ENCODE measurements at regions of chr3 and their contacts with region 1.

Region 1: GRCh38 chr3:126679318-126679751 is 24.4 kb upstream of the TXNRD3 start:
- DNase-seq: peak; percentile 66 to 94 (median 78)
- ATAC-seq: peak; percentile 98
- H3K4me3 ChIP-seq: no peak overlapping the region
- H3K27ac ChIP-seq: no peak overlapping the region
- H3K4me1 ChIP-seq: peaks cover 0 to 8% of the 10 kb centered on the region in 2 donors
- H3K27me3 ChIP-seq: peaks cover 0 to 20% of the 10 kb centered on the region in 2 donors
- CTCF ChIP-seq: peak; percentile 98

Region 2: GRCh38 chr3:126419886-126420786 is 259.2 kb before region 1 on chr3:
- intact Hi-C with region 1: no loop called
- DNase-seq: no peak
- ATAC-seq: no peak
- H3K4me3 ChIP-seq: no peak overlapping the region
- H3K27ac ChIP-seq: no peak overlapping the region
- H3K4me1 ChIP-seq: no peaks in the 10 kb centered on the region
- H3K27me3 ChIP-seq: peaks cover 6 to 53% of the 10 kb centered on the region in 2 donors
- CTCF ChIP-seq: no peak

Region 3: DNA sequence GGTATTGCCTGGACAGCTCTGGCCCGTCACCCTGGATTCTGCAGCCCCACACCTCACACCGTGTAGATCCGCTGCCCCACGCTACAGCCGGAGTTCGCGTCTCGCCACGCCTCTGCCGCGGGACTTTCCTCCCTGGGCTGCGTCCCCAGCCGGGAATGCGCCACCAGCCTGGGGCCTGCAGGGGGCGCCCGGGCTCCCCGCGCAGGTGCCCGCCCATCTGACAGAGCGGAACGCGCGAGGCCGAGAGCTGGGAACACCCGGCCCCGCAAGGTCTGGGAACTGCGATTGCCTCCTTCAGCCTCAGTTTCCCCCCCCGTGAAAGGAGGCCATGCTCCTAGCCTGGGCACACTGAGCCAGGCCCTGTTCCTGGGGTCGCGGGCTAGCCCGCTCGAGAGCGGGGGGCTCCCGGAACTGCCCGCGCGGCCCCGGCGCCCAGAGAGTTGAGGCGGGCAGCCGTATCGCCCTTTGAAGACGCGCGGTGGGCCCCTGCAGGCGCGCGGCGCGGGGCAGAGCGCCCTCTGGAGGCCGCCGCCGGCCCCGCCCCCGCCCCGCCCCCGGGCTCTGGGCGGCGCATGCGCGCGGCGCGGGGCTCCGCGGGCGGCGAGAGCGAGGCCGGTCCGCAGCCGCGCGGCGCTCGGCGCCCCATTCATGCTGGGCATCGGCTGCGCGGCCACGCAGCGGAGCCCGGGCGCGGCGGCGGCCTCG is 303.3 kb after region 1 on chr3 and contains the start of gene PLXNA1:
- intact Hi-C with region 1: loop called in 1 of 2 experiments (anchors 5 kb)
- DNase-seq: peak; percentile 67 to 94 (median 80)
- ATAC-seq: peak; percentile 94
- H3K4me3 ChIP-seq: peak within 1 kb of the TSS; percentile 66 to 76
- H3K27ac ChIP-seq: peak within 1 kb of the TSS; percentile 77 to 84
- H3K4me1 ChIP-seq: peaks cover 12 to 30% of the 10 kb centered on the region in 2 donors
- H3K27me3 ChIP-seq: peaks cover 0 to 62% of the 10 kb centered on the region in 2 donors
- CTCF ChIP-seq: peak; percentile 89 to 96
- polyA plus RNA-seq, gene PLXNA1: 27.2 to 39.5 (median 29.2) TPM

Region 4: DNA sequence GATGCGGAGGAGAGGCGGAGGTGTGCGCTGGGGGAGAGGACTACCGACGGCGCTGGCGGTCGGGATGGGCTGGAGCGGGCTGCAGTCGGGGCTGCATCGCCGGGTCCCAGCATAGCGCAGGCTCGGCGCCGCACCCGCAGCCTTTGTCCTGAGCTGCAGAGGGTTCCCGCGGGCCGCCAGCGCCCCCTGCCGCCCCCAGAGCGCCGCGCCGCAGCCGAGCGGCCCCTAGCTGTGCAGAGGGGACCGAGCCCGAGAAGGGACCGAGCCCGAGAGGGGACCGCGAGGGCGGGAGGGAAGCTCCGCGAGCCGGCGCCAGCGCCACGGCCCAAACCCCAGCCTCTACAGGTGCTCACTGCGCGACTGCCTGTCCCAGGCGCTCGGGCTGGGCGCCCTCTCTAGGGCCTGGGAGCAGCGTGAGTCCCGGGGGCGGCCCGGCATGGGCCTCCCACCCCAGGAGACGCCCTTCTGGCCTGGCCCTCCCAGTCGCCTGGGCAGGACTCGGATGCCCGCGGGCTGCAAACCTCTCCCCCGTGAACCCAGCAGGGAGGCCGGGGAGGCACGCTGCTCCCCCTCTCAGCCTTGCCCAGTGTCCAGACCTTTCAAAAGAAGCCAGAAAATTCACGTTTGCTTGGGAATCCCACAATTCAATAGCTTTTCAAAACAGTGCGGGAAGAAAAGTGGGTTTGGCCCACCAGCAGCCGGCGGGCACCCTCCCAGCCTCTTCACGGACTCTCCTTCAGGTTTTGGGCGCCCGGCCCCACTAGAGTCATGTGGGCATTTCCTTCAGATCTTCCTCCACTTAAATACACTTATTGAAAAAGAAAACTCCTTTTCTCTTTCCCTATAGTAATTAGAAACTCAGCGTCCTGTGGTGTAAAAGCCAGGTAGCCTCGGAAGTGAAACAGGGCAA is 776.5 kb after region 1 on chr3:
- intact Hi-C with region 1: loop called in 1 of 2 experiments (anchors 10 kb)
- DNase-seq: peak; percentile 55 to 91 (median 74)
- ATAC-seq: peak; percentile 96
- H3K4me3 ChIP-seq: peak overlapping the region; percentile 3 to 24
- H3K27ac ChIP-seq: peak overlapping the region in 1 of 2 donors; percentile 68
- H3K4me1 ChIP-seq: peaks cover 14 to 22% of the 10 kb centered on the region in 2 donors
- H3K27me3 ChIP-seq: peaks cover 30 to 70% of the 10 kb centered on the region in 2 donors
- CTCF ChIP-seq: peak; percentile 95 to 96

Region 5: DNA sequence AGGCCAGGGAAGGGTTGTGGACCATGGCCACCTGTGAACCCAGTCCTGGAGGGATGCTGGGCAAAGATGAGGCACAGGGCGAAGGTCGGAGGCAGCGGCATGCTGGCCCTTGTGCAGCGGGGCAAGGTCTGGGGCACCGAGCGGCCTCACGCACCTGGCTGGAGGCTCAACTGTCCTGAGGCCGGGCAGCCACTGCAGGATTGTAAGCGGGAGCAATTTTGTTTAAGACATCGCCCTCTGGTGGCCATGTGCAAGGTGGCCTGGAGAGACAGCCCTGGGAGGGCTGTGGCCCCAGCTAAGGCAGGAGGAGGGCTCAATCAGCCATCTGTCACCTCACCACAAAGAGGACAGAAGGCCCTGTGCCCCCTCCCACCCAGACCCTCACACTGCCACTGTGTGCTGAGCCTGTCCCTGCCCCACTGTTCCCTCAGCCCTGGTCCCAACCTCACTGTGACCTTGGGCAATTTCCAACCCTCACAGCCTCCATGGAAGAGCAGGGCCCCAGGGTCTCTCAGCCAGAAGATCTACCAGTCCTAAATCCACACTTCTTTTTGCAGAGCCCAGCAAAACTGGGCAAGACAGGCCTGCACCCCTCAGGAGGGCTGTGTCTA is 865.0 kb after region 1 on chr3:
- intact Hi-C with region 1: loop called in 1 of 2 experiments (anchors 5 kb)
- DNase-seq: peak; percentile 24 to 87 (median 66)
- ATAC-seq: peak; percentile 55
- H3K4me3 ChIP-seq: no peak overlapping the region
- H3K27ac ChIP-seq: no peak overlapping the region
- H3K4me1 ChIP-seq: peaks cover 0 to 20% of the 10 kb centered on the region in 2 donors
- H3K27me3 ChIP-seq: no peaks in the 10 kb centered on the region
- CTCF ChIP-seq: peak; percentile 89 to 92